CD8-positive, alpha-beta T cell (primary cell): ENCODE measurements at regions of chr6 and their contacts with region 1.

Region 1: DNA sequence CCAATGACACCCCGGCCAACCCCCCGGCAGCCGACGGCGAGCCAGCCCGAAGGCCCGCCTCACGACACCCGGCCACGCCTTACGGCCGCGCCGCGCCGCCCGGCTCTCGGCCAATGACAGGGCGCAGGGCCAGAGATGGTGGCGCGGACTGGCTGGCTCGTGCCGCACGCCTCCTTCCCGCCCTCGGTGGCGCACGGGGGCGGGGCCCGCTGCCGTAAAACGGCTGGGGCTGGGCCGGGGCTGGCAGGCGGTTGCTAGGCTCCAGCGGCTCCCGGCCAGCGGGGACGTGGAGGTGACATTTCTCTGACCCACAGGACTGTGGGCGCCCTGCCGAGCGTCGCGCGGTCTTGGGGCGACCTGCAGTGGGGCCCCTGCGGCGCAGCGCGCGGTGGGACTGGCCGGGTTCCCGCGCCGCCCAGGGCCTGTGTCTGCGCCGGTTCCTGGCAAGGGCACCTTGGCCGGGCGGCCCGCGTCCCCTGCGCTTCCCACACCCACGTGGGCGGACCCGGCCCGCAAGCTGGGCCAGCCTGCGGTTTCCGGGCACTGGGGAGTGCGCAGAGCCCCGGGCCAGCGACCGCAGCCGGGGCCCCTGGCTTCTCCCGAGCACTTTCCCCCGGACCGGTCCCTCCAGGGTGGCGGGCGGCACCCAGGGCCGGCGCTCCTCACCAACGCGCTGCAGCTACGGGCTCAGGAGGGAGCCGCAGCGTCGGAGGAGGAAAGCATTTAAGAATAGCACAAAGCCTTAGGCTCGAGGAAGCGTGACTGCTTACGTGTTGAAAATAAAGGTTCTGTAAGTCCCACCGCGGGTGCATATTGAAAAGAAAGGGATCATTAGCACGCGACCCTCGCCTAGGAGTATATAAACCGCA is at the start of gene MPC1:
- DNase-seq: peak; percentile 88 to 97 (median 93)
- ATAC-seq: peak; percentile 92
- H3K4me3 ChIP-seq: peak within 1 kb of the TSS; percentile 74 to 77
- H3K4me3 Mint-ChIP-seq: peak within 1 kb of the TSS; percentile 95
- H3K27ac ChIP-seq: peak within 1 kb of the TSS; percentile 73 to 75
- H3K27ac Mint-ChIP-seq: peak within 1 kb of the TSS; percentile 92
- H3K4me1 ChIP-seq: peaks cover 7% of the 10 kb centered on the region
- H3K4me1 Mint-ChIP-seq: peaks cover 14% of the 10 kb centered on the region
- H3K27me3 ChIP-seq: no peaks in the 10 kb centered on the region
- H3K27me3 Mint-ChIP-seq: no peaks in the 10 kb centered on the region
- CTCF ChIP-seq: no peak
- total RNA-seq, gene MPC1: 18.4 to 22.2 TPM

Region 2: DNA sequence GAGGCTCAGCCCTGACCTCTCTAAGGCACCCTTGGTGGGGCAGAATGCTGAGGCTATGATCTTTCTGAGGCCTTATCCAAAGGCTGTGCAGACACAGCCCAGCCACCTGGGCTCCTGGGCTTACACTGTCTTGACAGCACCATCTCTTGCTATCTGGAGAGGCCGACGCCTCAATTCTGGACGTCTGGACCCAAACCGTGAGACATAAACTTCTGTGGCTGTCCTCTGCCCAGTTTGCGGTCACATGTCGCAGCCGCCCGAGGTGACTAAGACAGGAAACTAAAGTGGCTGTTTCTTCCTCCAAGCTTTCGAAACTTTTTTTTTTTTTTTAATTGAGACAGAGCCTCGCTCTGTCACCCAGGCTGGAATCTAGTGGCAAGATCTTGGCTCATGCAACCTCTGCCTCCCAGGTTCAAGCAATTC is 124.3 kb before region 1 on chr6:
- CTCF ChIA-PET with region 1: interaction called, 3 read pairs
- POLR2A ChIA-PET with region 1: no interaction called
- intact Hi-C with region 1: loop called in 1 of 2 experiments (anchors 5 kb)
- DNase-seq: peak in 7 of 9 experiments; percentile 29 to 72 (median 54)
- ATAC-seq: peak; percentile 66
- H3K4me3 ChIP-seq: no peak overlapping the region
- H3K4me3 Mint-ChIP-seq: peak overlapping the region; percentile 73
- H3K27ac ChIP-seq: no peak overlapping the region
- H3K27ac Mint-ChIP-seq: peak overlapping the region; percentile 96
- H3K4me1 ChIP-seq: peaks cover 20% of the 10 kb centered on the region
- H3K4me1 Mint-ChIP-seq: peaks cover 50% of the 10 kb centered on the region
- H3K27me3 ChIP-seq: no peaks in the 10 kb centered on the region
- H3K27me3 Mint-ChIP-seq: no peaks in the 10 kb centered on the region
- CTCF ChIP-seq: no peak

Region 3: GRCh38 chr6:166313255-166314070 is 69.7 kb before region 1 on chr6:
- CTCF ChIA-PET with region 1: interaction called, 28 read pairs
- POLR2A ChIA-PET with region 1: interaction called, 3 read pairs
- intact Hi-C with region 1: loop called (anchors 1 kb)
- DNase-seq: peak in 8 of 9 experiments; percentile 18 to 76 (median 58)
- ATAC-seq: peak; percentile 98
- H3K4me3 ChIP-seq: no peak overlapping the region
- H3K4me3 Mint-ChIP-seq: no peak overlapping the region
- H3K27ac ChIP-seq: no peak overlapping the region
- H3K27ac Mint-ChIP-seq: no peak overlapping the region
- H3K4me1 ChIP-seq: peaks cover under 1% of the 10 kb centered on the region
- H3K4me1 Mint-ChIP-seq: no peaks in the 10 kb centered on the region
- H3K27me3 ChIP-seq: peaks cover 0 to 2% of the 10 kb centered on the region in 2 experiments
- H3K27me3 Mint-ChIP-seq: peaks cover 18% of the 10 kb centered on the region
- CTCF ChIP-seq: peak; percentile 61

Region 4: GRCh38 chr6:166342349-166343149 is 40.6 kb before region 1 on chr6 and contains the start of gene SFT2D1:
- CTCF ChIA-PET with region 1: interaction called, 8 read pairs
- POLR2A ChIA-PET with region 1: interaction called, 6 read pairs
- intact Hi-C with region 1: loop called (anchors 1 to 2 kb)
- DNase-seq: peak; percentile 44 to 84 (median 76)
- ATAC-seq: peak; percentile 37
- H3K4me3 ChIP-seq: peak within 1 kb of the TSS; percentile 90 to 100
- H3K4me3 Mint-ChIP-seq: peak within 1 kb of the TSS; percentile 89
- H3K27ac ChIP-seq: peak within 1 kb of the TSS; percentile 86 to 94
- H3K27ac Mint-ChIP-seq: peak within 1 kb of the TSS; percentile 92
- H3K4me1 ChIP-seq: peaks cover 38% of the 10 kb centered on the region
- H3K4me1 Mint-ChIP-seq: peaks cover 13% of the 10 kb centered on the region
- H3K27me3 ChIP-seq: no peaks in the 10 kb centered on the region
- H3K27me3 Mint-ChIP-seq: no peaks in the 10 kb centered on the region
- CTCF ChIP-seq: no peak
- total RNA-seq, gene SFT2D1: 7.3 to 7.7 TPM

Region 5: GRCh38 chr6:166419286-166419685 is 36.1 kb after region 1 on chr6:
- CTCF ChIA-PET with region 1: interaction called, 6 read pairs
- POLR2A ChIA-PET with region 1: interaction called, 5 read pairs
- intact Hi-C with region 1: loop called (anchors 1 to 2 kb)
- DNase-seq: peak in 8 of 9 experiments; percentile 50 to 82 (median 72)
- ATAC-seq: peak; percentile 35
- H3K4me3 ChIP-seq: no peak overlapping the region
- H3K4me3 Mint-ChIP-seq: peak overlapping the region; percentile 50
- H3K27ac ChIP-seq: peak overlapping the region; percentile 15 to 58
- H3K27ac Mint-ChIP-seq: peak overlapping the region; percentile 92
- H3K4me1 ChIP-seq: peaks cover 62% of the 10 kb centered on the region
- H3K4me1 Mint-ChIP-seq: peaks cover 75% of the 10 kb centered on the region
- H3K27me3 ChIP-seq: no peaks in the 10 kb centered on the region
- H3K27me3 Mint-ChIP-seq: no peaks in the 10 kb centered on the region
- CTCF ChIP-seq: no peak

Region 6: GRCh38 chr6:166627033-166627874 is 244.1 kb after region 1 on chr6 and contains the start of gene RPS6KA2:
- CTCF ChIA-PET with region 1: no interaction called
- POLR2A ChIA-PET with region 1: interaction called, 3 read pairs
- intact Hi-C with region 1: loop called (anchors 1 kb)
- DNase-seq: peak; percentile 99 to 100 (median 100)
- ATAC-seq: peak; percentile 91
- H3K4me3 ChIP-seq: peak within 1 kb of the TSS; percentile 70 to 80
- H3K4me3 Mint-ChIP-seq: peak within 1 kb of the TSS; percentile 94
- H3K27ac ChIP-seq: peak within 1 kb of the TSS; percentile 32 to 54
- H3K27ac Mint-ChIP-seq: peak within 1 kb of the TSS; percentile 84
- H3K4me1 ChIP-seq: peaks cover 17% of the 10 kb centered on the region
- H3K4me1 Mint-ChIP-seq: peaks cover 17% of the 10 kb centered on the region
- H3K27me3 ChIP-seq: peaks cover 0 to 4% of the 10 kb centered on the region in 2 experiments
- H3K27me3 Mint-ChIP-seq: peaks cover 36% of the 10 kb centered on the region
- CTCF ChIP-seq: no peak
- total RNA-seq, gene RPS6KA2: 2.2 TPM

Region 7: DNA sequence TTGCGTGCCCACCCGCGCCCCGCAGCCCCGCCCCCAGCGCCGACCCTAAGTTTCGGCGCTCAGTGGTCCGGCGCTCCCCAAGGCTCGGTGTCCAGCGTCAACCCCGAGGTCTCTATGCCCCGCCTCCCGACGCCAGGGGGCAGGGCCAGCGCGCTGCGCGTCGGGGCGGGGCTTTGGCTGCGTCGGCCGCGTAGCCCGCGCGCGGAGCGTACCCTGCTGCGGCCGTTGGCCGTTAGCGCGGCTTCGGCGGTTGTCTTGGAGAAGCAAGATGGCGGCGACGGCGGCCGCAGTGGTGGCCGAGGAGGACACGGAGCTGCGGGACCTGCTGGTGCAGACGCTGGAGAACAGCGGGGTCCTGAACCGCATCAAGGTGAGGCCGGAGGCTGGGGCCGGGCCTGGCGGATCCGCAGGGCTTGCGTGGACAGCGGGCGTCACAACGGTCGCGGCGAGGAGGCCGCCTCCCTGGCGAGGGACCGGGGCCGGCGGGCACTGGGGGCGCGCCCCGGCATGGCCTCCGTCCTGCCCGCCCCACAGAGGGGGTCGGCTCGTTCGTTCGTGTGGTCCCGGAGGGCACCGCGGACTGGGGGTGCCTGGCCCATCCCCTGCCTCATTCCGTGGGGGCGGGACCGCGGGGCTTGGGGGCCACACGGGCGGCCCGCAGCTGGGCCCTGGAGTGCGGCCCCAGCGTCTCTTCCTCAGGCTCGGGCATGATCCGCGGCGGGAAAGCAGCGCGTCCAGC is 616.1 kb after region 1 on chr6 and contains the start of gene CEP43:
- CTCF ChIA-PET with region 1: no interaction called
- POLR2A ChIA-PET with region 1: no interaction called
- intact Hi-C with region 1: loop called in 1 of 2 experiments (anchors 2 kb)
- DNase-seq: peak; percentile 80 to 95 (median 87)
- ATAC-seq: peak; percentile 92
- H3K4me3 ChIP-seq: peak within 1 kb of the TSS; percentile 63 to 99
- H3K4me3 Mint-ChIP-seq: peak within 1 kb of the TSS; percentile 86
- H3K27ac ChIP-seq: peak within 1 kb of the TSS; percentile 28 to 43
- H3K27ac Mint-ChIP-seq: peak within 1 kb of the TSS; percentile 77
- H3K4me1 ChIP-seq: peaks cover 20% of the 10 kb centered on the region
- H3K4me1 Mint-ChIP-seq: peaks cover 28% of the 10 kb centered on the region
- H3K27me3 ChIP-seq: no peaks in the 10 kb centered on the region
- H3K27me3 Mint-ChIP-seq: no peaks in the 10 kb centered on the region
- CTCF ChIP-seq: no peak
- total RNA-seq, gene CEP43: 5.7 to 8.7 TPM